ENCODE measurements at regions of chr1 and their contacts with region 1.

Region 1: DNA sequence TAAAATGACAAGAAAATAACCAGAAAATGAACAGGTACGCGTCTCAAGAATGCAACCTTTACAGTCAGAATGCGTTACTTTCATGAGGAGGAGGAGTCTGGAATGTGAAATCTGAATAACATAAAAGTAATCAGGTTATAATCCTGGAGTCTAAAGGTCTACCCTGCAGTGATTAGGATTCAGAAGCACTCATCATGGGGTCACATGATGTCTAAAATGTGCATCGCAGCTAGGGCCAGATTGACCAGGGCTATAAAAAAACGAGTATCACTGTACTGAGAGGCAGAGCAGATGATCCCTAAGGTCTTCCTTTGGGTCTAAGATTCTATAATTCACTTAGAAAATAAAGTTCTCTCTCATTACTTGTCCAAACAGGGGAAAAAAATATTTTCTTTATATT is 7.4 kb downstream of the EIF2D start:
- DNase-seq: no peak
- H3K4me3 ChIP-seq: no peak overlapping the region
- H3K27ac ChIP-seq: no peak overlapping the region
- H3K4me1 ChIP-seq: no peaks in the 10 kb centered on the region
- H3K27me3 ChIP-seq: no peaks in the 10 kb centered on the region
- CTCF ChIP-seq: no peak
- POLR2A ChIP-seq: no peak

Region 2: GRCh38 chr1:206537141-206537540 is 67.7 kb before region 1 on chr1:
- intact Hi-C with region 1: no loop called
- DNase-seq: no peak
- H3K4me3 ChIP-seq: no peak overlapping the region
- H3K27ac ChIP-seq: peak overlapping the region in 1 of 2 donors; percentile 69
- H3K4me1 ChIP-seq: peaks cover 0 to 11% of the 10 kb centered on the region in 2 donors
- H3K27me3 ChIP-seq: no peaks in the 10 kb centered on the region
- CTCF ChIP-seq: no peak
- POLR2A ChIP-seq: no peak

Region 3: DNA sequence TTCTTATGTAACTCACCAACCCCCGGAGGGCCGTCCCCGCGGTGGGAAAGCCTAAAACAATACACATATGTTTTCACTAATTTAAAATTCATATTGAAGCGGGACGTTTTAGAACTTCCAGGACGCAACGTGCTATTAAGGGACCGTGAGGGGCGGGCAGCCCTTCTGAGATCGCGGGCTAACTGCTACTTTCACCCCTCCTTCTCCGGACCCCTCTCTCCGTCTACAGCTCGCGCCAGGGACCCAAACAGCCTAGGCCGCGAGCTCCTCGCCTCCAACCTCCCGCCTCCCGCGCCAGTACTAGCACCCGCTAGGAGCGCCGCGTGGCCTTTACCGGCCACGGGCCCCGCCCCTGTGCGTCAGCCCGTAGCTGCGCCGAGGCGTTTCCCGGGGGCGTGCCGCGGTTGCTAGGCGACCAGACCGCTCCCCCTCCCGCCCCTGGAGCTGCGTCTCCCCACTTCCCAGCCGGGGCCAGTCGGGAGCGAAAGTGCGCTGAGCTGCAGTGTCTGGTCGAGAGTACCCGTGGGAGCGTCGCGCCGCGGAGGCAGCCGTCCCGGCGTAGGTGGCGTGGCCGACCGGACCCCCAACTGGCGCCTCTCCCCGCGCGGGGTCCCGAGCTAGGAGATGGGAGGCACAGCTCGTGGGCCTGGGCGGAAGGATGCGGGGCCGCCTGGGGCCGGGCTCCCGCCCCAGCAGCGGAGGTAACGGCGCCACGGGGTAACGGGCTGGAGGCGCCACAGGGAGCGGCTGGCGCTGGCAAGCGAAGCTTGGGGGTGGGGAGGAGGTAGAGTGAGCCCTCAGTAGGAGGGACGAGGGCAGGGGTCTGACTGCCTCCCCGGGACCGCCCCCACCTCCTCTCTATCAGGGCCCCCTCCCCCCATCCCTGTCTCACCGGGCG is 30.5 kb after region 1 on chr1 and contains the start of gene DYRK3:
- intact Hi-C with region 1: loop called (anchors 1 kb)
- DNase-seq: peak; percentile 92 to 93
- H3K4me3 ChIP-seq: peak within 1 kb of the TSS; percentile 84 to 90 (median 85)
- H3K27ac ChIP-seq: peak within 1 kb of the TSS; percentile 90 to 92
- H3K4me1 ChIP-seq: peaks cover 3 to 4% of the 10 kb centered on the region in 2 donors
- H3K27me3 ChIP-seq: no peaks in the 10 kb centered on the region
- CTCF ChIP-seq: peak in 2 of 3 donors; percentile 20 to 28
- POLR2A ChIP-seq: peak; percentile 94
- total RNA-seq, gene DYRK3: 7.8 to 39.4 (median 14.1) TPM